ENCODE measurements at regions of chr19 and their contacts with region 1.

Region 1: DNA sequence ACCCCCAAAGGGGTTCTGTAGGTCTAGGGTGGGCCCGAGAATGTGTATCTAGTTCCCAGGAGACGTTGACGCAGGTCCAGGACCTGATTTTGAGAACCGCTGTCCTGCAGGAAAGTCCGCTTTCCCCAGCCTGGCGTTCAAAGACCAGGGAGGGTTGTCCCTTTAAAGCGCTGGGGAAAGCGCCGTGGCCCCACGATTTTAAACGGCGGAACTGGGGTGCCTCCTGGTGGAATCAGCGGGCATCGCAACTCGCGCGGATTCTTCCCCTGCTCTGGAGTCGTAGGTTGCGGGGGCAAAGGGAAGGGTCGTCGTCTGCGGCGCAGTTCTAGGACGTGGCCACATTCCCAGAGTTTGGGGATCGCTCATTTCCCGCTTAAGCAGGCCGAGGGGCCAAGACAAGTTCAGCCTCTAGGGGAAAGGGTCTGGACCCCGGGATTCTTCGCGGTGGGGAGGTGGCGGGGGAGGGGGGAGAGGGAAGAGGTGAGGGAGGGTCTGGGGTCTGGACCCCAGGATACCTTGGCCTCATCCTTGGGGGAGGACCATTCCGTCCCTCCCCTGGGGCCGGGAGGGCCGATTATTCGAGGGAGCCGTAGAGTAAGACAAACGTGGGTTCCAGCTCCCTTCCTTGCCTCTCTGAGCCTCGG is 7.7 kb downstream of the PNMA8B start:
- DNase-seq: peak; percentile 88
- H3K4me3 ChIP-seq: peak overlapping the region; percentile 9 to 14
- H3K27ac ChIP-seq: no peak overlapping the region
- H3K4me1 ChIP-seq: peaks cover 37% of the 10 kb centered on the region
- H3K27me3 ChIP-seq: no peaks in the 10 kb centered on the region
- CTCF ChIP-seq: peak; percentile 90 to 99 (median 96)
- POLR2A ChIP-seq: no peak

Region 2: DNA sequence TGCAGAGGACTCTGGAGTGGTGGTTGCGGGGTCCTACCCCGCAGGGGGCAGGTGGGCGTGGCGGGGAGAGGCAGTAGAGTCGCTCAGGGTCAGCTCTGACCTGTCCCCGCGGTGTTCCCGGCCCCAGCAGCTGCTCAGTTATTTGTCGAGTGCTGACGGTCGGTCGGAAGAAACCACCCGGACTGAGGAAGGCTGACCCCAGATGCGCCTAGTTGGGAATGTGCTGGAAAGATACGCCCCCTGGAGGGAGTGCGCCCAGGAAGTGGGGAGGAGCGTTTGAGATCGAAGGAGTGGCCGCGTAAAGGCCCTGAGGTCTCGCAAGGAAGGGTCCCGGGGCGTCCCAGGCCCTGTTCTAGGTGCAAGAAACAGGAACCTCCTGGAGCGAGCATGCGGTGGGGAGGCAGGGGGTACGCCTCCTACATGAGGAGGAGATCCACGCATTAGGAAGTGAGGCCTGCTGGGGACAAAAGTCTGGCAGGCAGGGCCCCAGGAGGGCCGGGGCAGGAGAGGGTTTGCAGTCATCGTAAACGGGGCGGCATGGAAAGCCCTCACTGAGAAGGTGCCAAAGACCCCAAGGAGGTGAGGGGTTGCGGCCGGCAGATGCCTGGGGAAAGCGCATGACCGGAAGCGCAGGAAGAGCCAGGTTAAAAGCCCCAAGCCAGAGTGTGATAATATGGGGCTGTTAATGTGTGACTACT is 83.7 kb before region 1 on chr19:
- intact Hi-C with region 1: loop called (anchors 5 kb)
- DNase-seq: peak; percentile 87
- H3K4me3 ChIP-seq: peak overlapping the region; percentile 51 to 56
- H3K27ac ChIP-seq: peak overlapping the region; percentile 71 to 87
- H3K4me1 ChIP-seq: peaks cover 32% of the 10 kb centered on the region
- H3K27me3 ChIP-seq: no peaks in the 10 kb centered on the region
- CTCF ChIP-seq: peak; percentile 12 to 32 (median 24)
- POLR2A ChIP-seq: no peak

Measured in testis (tissue), 5 donors.